ENCODE measurements at regions of chr9 and their contacts with region 1.

Region 1: DNA sequence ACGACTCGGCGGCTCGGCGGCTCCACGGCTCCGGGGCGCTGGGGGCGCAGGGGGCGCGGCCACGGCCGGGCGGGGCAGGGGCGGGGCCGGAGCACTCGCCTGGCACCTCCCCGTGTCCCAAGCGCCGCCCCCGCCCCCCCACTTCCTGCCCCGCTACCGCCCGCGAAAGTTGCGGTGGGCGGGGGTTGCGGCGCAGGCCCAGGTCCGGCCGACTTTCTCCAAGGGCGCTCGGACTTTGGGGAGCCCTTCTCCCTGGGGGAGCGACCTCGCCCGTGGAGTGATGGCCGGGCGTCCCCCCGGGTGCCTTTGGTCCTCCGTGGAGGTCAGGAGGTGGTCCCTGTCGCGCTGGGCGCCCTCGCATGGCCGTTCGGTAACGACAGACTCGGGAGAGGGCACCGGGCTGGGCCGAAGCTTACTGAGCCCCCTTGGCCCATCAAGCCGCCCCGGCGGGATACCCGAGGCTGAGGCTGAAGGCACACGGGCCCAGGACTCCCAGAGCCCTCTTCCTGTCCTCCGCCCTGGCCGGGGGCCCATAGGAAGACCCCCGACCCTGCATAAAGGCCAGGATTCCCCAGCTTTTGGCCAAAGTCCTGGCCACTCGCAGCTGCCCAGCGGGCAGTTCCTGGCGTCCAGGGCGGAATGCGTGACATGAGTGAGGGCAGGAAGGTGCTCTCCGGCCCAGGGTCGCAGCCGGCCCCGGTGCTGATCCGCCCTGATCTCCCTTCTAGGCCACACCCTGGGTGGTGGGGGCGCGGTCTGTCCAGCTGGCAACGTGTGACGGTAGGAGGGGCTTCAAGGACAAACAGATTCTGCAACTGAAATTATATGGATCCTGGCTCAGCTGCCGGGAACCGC is 883 bp upstream of the VAV2 start:
- DNase-seq: peak; percentile 96
- H3K4me3 ChIP-seq: peak overlapping the region; percentile 69 to 77 (median 72)
- H3K27ac ChIP-seq: peak overlapping the region; percentile 87 to 95 (median 90)
- H3K4me1 ChIP-seq: peaks cover 0 to 37% (median 29%) of the 10 kb centered on the region in 4 donors
- H3K27me3 ChIP-seq: no peaks in the 10 kb centered on the region
- CTCF ChIP-seq: peak in 2 of 4 experiments; percentile 13 to 14
- EP300 ChIP-seq: no peak
- POLR2A ChIP-seq: peak; percentile 61 to 74

Region 2: DNA sequence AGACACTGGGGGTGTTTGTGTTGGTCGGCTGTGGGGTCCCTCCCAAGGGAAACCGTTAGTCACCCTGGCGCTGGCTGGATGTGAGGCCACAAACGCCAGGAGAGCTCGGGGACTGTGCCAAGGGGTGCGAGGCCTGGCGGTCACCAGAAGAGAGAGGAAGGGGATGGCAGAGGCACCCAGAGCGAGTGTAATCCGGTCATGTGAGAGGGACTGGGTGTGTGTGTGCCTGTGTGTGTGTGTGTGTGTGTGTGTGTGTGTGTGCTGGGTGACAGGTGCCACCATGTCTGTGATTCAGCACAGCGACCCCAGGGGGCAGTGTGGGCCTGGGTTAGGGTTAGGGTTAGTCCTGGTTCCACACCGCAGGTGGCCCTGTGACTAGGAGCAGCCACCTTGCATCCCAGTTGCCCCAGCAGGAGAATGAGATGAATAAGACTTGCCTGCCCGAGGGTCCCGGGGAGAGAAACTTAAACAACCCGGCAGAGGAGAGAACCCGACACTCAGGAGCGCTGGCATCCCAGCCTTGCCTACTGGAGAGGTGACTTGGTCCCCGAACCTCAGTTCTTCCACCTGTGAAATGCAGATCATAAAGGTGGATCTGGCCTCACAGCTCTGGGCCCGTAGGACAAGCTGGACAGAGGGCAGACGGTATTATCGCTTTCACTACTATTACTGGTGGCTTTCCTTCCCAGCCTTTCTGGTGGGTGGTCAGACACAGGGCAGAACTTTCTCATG is 459.9 kb before region 1 on chr9:
- intact Hi-C with region 1: loop called (anchors 2 kb)
- DNase-seq: peak; percentile 83
- H3K4me3 ChIP-seq: no peak overlapping the region
- H3K27ac ChIP-seq: peak overlapping the region in 2 of 4 donors; percentile 66 to 70
- H3K4me1 ChIP-seq: peaks cover 0 to 45% (median 37%) of the 10 kb centered on the region in 4 donors
- H3K27me3 ChIP-seq: no peaks in the 10 kb centered on the region
- CTCF ChIP-seq: peak; percentile 53 to 85 (median 73)
- EP300 ChIP-seq: no peak
- POLR2A ChIP-seq: no peak

Region 3: GRCh38 chr9:133782157-133783130 is 210.6 kb before region 1 on chr9:
- intact Hi-C with region 1: loop called (anchors 2 kb)
- DNase-seq: peak; percentile 78
- H3K4me3 ChIP-seq: no peak overlapping the region
- H3K27ac ChIP-seq: no peak overlapping the region
- H3K4me1 ChIP-seq: peaks cover 0 to 5% (median 0%) of the 10 kb centered on the region in 4 donors
- H3K27me3 ChIP-seq: no peaks in the 10 kb centered on the region
- CTCF ChIP-seq: peak; percentile 24 to 71 (median 56)
- EP300 ChIP-seq: no peak
- POLR2A ChIP-seq: no peak

Region 4: DNA sequence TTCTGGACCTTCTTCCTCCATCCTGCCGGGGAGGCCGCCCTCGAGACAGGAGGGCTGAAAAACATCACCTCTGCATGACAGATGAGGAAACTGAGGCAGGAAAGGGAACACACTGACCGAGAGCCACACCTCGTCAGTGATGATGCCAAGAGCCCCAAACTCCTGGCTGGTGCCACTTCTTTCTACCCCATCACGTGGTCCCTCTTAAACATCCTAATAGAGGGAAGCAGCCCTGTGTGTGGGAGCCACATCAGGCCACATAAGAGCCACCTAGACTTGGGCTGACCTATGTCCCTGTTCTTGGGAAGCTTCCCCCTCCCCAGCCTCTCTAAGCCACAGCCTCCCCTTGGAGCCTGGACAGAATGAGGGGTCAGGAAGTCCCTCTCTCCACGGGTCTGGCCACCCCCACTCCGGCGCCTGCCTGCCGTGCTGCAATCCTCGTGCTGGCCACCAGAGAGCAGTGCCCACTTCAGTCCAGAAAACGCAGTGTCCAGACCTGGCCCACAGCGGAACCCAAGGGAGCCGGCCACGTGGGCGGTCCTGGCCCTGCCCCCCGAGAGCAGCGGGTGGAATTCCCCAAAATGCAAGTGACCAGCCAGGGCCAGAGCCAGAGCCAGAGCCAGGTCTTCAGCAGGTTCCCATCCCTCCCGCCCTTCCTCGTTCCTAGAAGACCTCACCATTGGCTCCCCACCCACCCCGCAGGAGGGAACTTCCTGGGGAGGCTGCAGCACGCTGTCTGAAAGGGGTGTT is 200.1 kb before region 1 on chr9:
- intact Hi-C with region 1: loop called (anchors 1 kb)
- DNase-seq: peak; percentile 88
- H3K4me3 ChIP-seq: no peak overlapping the region
- H3K27ac ChIP-seq: no peak overlapping the region
- H3K4me1 ChIP-seq: peaks cover 0 to 13% (median 6%) of the 10 kb centered on the region in 4 donors
- H3K27me3 ChIP-seq: no peaks in the 10 kb centered on the region
- CTCF ChIP-seq: peak; percentile 84 to 99 (median 96)
- EP300 ChIP-seq: no peak
- POLR2A ChIP-seq: no peak

Region 5: GRCh38 chr9:133972041-133972941 is 20.7 kb before region 1 on chr9:
- intact Hi-C with region 1: no loop called
- DNase-seq: no peak
- H3K4me3 ChIP-seq: no peak overlapping the region
- H3K27ac ChIP-seq: no peak overlapping the region
- H3K4me1 ChIP-seq: no peaks in the 10 kb centered on the region
- H3K27me3 ChIP-seq: no peaks in the 10 kb centered on the region
- CTCF ChIP-seq: no peak
- EP300 ChIP-seq: no peak
- POLR2A ChIP-seq: no peak

Region 6: GRCh38 chr9:134024828-134025605 is 32.0 kb after region 1 on chr9 and contains the start of gene BRD3OS:
- intact Hi-C with region 1: loop called (anchors 1 kb)
- DNase-seq: peak; percentile 99
- H3K4me3 ChIP-seq: peak within 1 kb of the TSS; percentile 66 to 95 (median 84)
- H3K27ac ChIP-seq: peak within 1 kb of the TSS; percentile 76 to 82 (median 82)
- H3K4me1 ChIP-seq: peaks cover 0 to 20% (median 11%) of the 10 kb centered on the region in 4 donors
- H3K27me3 ChIP-seq: no peaks in the 10 kb centered on the region
- CTCF ChIP-seq: no peak
- EP300 ChIP-seq: no peak
- POLR2A ChIP-seq: no peak
- total RNA-seq, gene BRD3OS: 11.7 to 19.4 (median 12.7) TPM

Region 7: DNA sequence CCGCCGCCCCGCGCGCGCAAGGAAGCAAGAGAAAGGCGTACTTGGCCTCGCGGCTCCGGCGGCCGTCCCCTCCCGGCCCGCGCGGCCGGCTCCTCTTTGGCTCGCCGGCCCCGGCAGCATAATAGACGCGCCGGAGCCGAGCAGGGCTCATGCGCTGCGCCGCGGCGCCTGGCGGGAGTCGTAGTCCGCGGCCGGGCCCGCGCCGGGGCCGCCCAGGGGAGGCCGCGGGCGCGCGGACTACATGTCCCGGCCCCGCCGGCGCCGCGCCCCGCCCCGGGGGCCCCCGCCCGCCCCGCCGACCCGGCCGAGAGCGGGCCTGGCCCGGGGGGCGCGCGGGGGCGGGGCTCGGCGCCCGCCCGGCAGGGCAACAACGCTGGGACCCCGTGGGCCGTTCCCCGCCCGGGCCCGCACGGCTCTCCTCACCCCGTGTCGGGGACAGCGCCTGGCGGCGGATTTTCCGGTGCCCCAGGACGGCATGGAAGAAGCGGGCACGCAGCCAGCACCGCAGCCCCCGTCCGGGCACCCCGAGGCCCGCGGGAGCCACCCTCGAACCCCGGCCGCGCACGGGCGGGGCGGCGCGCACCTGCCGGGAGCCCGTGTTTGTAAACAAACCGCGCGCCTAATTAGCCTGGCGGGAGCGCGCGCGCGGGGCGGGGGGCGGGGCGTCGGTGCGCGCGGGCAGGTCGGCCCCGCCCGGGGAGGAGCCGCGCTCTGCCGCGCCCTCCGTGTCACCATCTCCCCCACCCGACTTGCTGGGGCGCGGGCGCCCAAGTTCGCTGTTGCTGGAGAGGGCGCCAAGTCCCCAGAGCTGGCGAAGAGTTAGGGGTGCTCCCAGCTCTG is 75.1 kb after region 1 on chr9 and contains the start of gene BRD3:
- intact Hi-C with region 1: no loop called
- DNase-seq: peak; percentile 91
- H3K4me3 ChIP-seq: peak within 1 kb of the TSS; percentile 67 to 94 (median 94)
- H3K27ac ChIP-seq: peak within 1 kb of the TSS; percentile 97 to 100 (median 98)
- H3K4me1 ChIP-seq: peaks cover 0 to 45% (median 37%) of the 10 kb centered on the region in 4 donors
- H3K27me3 ChIP-seq: no peaks in the 10 kb centered on the region
- CTCF ChIP-seq: no peak
- EP300 ChIP-seq: no peak
- POLR2A ChIP-seq: no peak
- total RNA-seq, gene BRD3: 21.8 to 34.5 (median 25.7) TPM